ENCODE measurements at regions of chr11 and their contacts with region 1.

Region 1: DNA sequence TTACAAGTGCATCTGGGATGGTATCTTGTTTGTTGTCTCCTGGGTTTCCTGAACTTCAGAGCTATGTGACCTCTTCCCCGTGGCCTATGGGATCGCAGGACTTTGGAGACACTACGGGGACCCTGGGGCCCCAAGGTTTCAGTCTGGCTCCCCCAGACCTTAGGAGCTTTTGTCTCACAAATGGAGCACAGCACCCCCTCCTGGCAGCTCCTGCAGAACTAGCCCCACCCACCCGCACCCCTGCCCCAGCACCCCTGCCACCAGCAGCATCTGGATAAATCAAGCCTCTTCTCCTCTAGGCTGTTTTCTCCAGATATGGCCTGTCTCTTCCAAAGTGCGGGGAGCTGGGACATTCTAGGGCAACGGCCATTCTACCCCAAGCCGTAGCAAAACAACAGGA is 10.4 kb downstream of the RCOR2 start:
- DNase-seq: no peak
- H3K4me3 ChIP-seq: no peak overlapping the region
- H3K27ac ChIP-seq: no peak overlapping the region
- H3K27me3 ChIP-seq: no peaks in the 10 kb centered on the region
- CTCF ChIP-seq: 0 out of 2 replicates have a peak, but pooled peaks have one; percentile 20

Region 2: GRCh38 chr11:63821411-63821810 is 85.2 kb before region 1 on chr11:
- CTCF ChIA-PET with region 1: interaction called, 10 read pairs
- POLR2A ChIA-PET with region 1: no interaction called
- DNase-seq: no peak
- H3K4me3 ChIP-seq: no peak overlapping the region
- H3K27ac ChIP-seq: no peak overlapping the region
- H3K27me3 ChIP-seq: no peaks in the 10 kb centered on the region
- CTCF ChIP-seq: no peak

Region 3: DNA sequence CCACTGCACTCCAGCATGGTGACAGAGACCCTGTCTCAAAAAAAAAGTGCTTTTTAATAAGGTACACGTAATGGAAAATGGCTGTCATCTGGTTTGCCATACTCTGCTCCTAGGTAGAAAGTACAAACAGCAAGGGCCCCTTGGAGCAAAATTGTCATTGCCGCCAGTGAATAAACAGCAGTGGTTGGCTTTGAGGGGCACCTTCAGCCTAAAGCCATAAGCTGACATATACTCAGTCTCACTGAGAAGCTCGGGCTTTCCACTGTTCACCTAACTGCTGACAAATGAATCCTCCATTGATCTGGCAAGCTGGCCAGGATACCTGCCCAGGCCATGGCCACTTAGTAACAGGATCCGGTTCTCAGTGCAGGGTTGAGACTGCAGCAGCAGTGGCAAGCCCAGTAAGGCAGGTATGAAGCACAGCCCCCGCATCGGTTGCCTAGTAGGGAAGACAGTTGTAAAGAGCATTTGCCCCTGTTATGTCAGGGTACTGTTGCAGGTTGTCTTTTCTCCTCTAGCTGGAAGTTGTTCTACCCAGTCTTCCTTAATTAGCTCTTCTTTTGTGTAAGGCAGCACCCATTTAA is 28.8 kb before region 1 on chr11:
- CTCF ChIA-PET with region 1: interaction called, 10 read pairs
- POLR2A ChIA-PET with region 1: no interaction called
- DNase-seq: no peak
- H3K4me3 ChIP-seq: no peak overlapping the region
- H3K27ac ChIP-seq: no peak overlapping the region
- H3K27me3 ChIP-seq: no peaks in the 10 kb centered on the region
- CTCF ChIP-seq: no peak

Measured in AG04450 (cell line).